SK-N-SH (cell line): ENCODE measurements at regions of chr4 and their contacts with region 1.

Region 1: GRCh38 chr4:77203380-77204197 is 46.6 kb downstream of the CCNG2 start:
- DNase-seq: peak; percentile 61
- H3K4me3 ChIP-seq: no peak overlapping the region
- H3K27ac ChIP-seq: no peak overlapping the region
- H3K4me1 ChIP-seq: no peaks in the 10 kb centered on the region; a peak in 1 of 4 replicates
- H3K27me3 ChIP-seq: peaks cover 21% of the 10 kb centered on the region
- CTCF ChIP-seq: peak; percentile 74
- EP300 ChIP-seq: no peak
- RAD21 ChIP-seq: peak; percentile 89

Region 2: GRCh38 chr4:76246025-76246424 is 957.6 kb before region 1 on chr4:
- CTCF ChIA-PET with region 1: no interaction called
- POLR2A ChIA-PET with region 1: no interaction called
- DNase-seq: no peak
- H3K4me3 ChIP-seq: no peak overlapping the region
- H3K27ac ChIP-seq: no peak overlapping the region
- H3K4me1 ChIP-seq: peaks cover 0 to 2% of the 10 kb centered on the region in 2 experiments; a peak in 1 of 4 replicates
- H3K27me3 ChIP-seq: no peaks in the 10 kb centered on the region; the same call in 1 of the 2 replicates
- CTCF ChIP-seq: no peak
- EP300 ChIP-seq: no peak
- RAD21 ChIP-seq: peak; percentile 19; the same call in 1 of the 2 replicates

Region 3: GRCh38 chr4:76430519-76431388 is 772.8 kb before region 1 on chr4:
- CTCF ChIA-PET with region 1: interaction called, 15 read pairs
- POLR2A ChIA-PET with region 1: no interaction called
- DNase-seq: peak; percentile 67
- H3K4me3 ChIP-seq: peak overlapping the region in 1 of 2 experiments; percentile 40; a peak in 1 of 4 replicates
- H3K27ac ChIP-seq: no peak overlapping the region
- H3K4me1 ChIP-seq: no peaks in the 10 kb centered on the region
- H3K27me3 ChIP-seq: no peaks in the 10 kb centered on the region
- CTCF ChIP-seq: peak; percentile 94
- EP300 ChIP-seq: no peak
- RAD21 ChIP-seq: peak; percentile 83

Region 4: DNA sequence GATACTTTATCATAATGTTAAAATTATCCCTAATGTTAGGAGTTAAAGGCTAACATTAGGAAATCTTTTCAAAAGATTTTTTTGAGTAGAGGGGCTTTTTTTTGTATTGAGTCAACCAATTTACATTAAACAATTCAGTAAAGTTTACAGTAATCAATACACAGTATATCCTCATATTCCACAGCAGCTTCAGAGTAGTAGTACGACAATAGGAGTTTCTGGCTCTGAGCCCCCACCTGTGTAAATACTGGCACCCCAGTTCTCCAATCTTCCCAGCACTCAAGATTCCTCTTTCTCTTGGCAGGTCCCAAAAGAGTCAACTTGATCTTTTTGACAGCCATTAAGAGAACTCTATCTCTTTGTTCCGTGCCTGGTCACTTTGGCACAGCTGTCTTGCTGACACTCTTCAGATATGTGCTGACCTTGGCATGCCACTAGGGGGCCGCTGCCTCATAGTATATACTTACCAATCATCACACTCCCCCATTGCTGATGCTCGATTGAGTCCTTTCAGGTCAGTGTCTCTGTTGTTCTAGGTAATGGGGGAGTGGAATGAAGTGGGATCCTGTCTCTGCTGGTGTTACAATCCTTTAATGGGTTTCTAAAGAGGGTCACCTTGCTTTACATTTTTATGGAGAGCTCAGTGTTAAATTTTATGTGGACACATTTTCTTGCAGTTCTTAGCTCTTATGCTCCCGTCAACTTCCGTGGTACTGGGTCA is 108.3 kb before region 1 on chr4:
- CTCF ChIA-PET with region 1: interaction called, 106 read pairs
- POLR2A ChIA-PET with region 1: no interaction called
- DNase-seq: peak; percentile 71
- H3K4me3 ChIP-seq: peak overlapping the region in 1 of 2 experiments; percentile 14; a peak in 1 of 4 replicates
- H3K27ac ChIP-seq: no peak overlapping the region
- H3K4me1 ChIP-seq: peaks cover 0 to 6% of the 10 kb centered on the region in 2 experiments; a peak in 2 of 4 replicates
- H3K27me3 ChIP-seq: no peaks in the 10 kb centered on the region
- CTCF ChIP-seq: peak; percentile 81
- EP300 ChIP-seq: no peak
- RAD21 ChIP-seq: peak; percentile 80

Region 5: GRCh38 chr4:77156533-77156911 is 47.1 kb before region 1 on chr4:
- CTCF ChIA-PET with region 1: interaction called, 10 read pairs
- POLR2A ChIA-PET with region 1: no interaction called
- DNase-seq: peak; percentile 91
- H3K4me3 ChIP-seq: peak overlapping the region; percentile 100
- H3K27ac ChIP-seq: peak overlapping the region; percentile 96 to 99
- H3K4me1 ChIP-seq: peaks cover 8 to 14% of the 10 kb centered on the region in 2 experiments; a peak in 2 of 4 replicates
- H3K27me3 ChIP-seq: no peaks in the 10 kb centered on the region
- CTCF ChIP-seq: no peak
- EP300 ChIP-seq: peak in 1 of 2 experiments; percentile 66; a peak in 1 of 4 replicates
- RAD21 ChIP-seq: peak; percentile 5; the same call in 1 of the 2 replicates

Region 6: DNA sequence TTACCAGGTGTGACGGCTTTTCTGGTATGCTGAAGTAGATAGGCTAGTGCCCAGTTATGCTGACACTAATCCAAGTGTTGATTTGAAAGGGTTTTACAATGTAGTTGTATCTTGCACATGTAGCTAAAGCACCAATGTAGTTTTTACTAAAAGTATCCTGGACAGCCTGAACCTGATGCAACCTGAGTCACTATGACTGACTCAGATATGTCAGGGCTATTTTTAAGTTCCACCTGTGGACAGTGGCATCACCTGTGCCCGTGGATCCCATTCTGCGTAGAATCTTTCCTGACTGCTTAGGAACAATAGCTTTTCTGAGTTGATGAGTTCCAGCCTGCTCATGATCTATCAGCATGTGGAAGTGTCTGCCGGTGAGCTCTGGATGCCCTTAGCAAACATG is 11.5 kb after region 1 on chr4:
- CTCF ChIA-PET with region 1: interaction called, 19 read pairs
- POLR2A ChIA-PET with region 1: no interaction called
- DNase-seq: no peak
- H3K4me3 ChIP-seq: no peak overlapping the region
- H3K27ac ChIP-seq: no peak overlapping the region
- H3K4me1 ChIP-seq: no peaks in the 10 kb centered on the region
- H3K27me3 ChIP-seq: peaks cover 1% of the 10 kb centered on the region; the same call in 1 of the 2 replicates
- CTCF ChIP-seq: no peak
- EP300 ChIP-seq: no peak
- RAD21 ChIP-seq: no peak